HEK293T (cell line): ENCODE measurements at regions of chr17 and their contacts with region 1.

Region 1: GRCh38 chr17:75614006-75614405 is 19.2 kb upstream of the SMIM5 start:
- DNase-seq: peak; percentile 74

Region 2: DNA sequence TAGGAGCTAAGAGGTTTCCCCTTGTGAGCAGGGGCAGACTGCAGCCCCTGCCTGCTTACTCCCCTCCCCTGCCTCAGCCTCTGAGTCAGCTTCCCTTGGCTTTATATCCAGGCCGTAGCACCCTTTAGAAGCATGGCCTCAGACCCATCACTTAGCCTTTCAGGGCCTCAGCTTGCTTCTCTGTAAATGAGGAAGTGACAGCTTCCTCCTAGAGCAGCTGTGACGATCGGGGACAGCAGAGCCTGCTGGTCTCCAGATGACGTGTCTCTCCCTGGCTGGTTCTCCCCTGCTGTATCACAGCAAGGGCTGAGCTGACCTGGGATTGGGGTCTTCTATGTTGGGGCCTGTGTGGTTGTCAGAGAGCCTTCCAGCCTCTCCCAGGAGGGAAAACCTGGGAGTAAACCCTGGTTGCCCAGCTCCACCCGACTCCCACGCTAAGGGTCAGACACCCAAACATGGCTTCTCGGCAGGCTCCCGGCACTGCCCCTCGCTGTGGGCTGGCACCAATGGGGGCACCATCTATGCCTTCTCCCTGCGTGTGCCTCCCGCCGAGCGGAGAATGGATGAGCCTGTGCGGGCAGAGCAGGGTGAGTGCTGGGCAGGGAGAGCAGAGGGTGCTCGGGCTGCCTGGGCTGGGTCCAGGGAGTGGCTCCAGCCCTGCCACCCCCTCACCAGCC is 42.7 kb before region 1 on chr17:
- CTCF ChIA-PET with region 1: no interaction called
- POLR2A ChIA-PET with region 1: no interaction called
- DNase-seq: no peak

Region 3: GRCh38 chr17:75589012-75589918 is 24.7 kb before region 1 on chr17:
- CTCF ChIA-PET with region 1: no interaction called
- POLR2A ChIA-PET with region 1: no interaction called
- DNase-seq: peak; percentile 100

Region 4: DNA sequence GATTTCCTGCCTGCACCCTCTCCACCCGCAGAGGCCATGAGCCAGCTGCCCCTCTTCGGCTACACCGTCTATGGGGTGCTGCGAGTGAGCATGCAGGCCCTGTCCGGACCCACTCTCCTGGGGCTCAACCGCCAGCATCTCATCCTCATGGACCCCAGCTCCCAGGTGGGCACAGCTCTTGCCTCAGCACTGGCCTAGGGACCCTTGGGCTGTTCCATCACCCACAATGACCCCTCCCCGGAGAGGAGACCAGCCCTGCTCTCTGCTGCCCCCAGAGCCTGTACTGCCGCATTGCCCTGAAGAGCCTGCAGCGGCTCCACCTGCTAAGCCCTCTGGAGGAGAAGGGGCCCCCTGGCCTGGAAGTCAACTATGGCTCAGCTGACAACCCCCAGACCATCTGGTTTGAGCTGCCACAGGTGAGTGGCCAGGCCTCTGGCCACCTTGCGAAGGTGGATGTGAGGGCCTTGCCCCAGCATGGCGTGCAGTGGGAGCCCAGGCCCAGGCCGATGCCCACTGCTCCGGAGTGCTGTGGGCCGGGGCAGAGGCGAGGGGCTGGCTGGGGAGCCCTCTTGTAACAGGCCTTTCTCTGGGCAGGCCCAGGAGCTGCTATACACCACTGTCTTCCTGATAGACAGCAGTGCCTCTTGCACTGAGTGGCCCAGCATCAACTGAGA is 11.9 kb after region 1 on chr17:
- CTCF ChIA-PET with region 1: interaction called, 12 read pairs
- POLR2A ChIA-PET with region 1: interaction called, 3 read pairs
- DNase-seq: peak; percentile 80